Heart right ventricle (tissue), 16 donors: ENCODE measurements at regions of chr7 and their contacts with region 1.

Region 1: GRCh38 chr7:46126675-46127300 is 205.7 kb upstream of the IGFBP3 start:
- DNase-seq: no peak
- ATAC-seq: no peak
- H3K4me3 ChIP-seq: no peak overlapping the region
- H3K27ac ChIP-seq: no peak overlapping the region
- H3K4me1 ChIP-seq: peaks cover 0 to 16% (median 4%) of the 10 kb centered on the region in 9 donors
- H3K27me3 ChIP-seq: no peaks in the 10 kb centered on the region
- CTCF ChIP-seq: no peak

Region 2: DNA sequence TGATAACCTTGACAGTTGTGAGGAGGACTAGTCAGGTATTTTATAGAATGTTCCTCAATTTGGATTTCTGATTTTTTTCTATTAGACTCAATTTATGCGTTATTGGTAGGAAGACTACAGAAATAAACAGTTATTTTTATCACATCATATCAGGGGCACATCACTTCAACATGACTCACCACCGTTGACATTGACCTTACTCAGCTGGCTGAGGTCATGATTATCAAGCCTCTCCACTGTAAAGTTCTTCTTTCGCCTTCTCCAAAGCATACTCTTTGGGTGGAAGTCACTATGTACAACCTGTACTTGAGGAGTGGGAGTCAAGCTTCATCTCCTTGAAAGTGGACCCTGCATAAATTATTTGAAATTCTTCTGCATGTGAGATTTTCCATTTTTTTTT is 11.4 kb before region 1 on chr7:
- intact Hi-C with region 1: loop called in 1 of 10 experiments (anchors 1 kb)
- DNase-seq: no peak
- ATAC-seq: peak in 2 of 8 donors; percentile 37 to 56
- H3K4me3 ChIP-seq: no peak overlapping the region
- H3K27ac ChIP-seq: no peak overlapping the region
- H3K4me1 ChIP-seq: peaks cover 0 to 8% (median 0%) of the 10 kb centered on the region in 9 donors
- H3K27me3 ChIP-seq: no peaks in the 10 kb centered on the region
- CTCF ChIP-seq: no peak